ENCODE measurements at regions of chr1 and their contacts with region 1.

Region 1: DNA sequence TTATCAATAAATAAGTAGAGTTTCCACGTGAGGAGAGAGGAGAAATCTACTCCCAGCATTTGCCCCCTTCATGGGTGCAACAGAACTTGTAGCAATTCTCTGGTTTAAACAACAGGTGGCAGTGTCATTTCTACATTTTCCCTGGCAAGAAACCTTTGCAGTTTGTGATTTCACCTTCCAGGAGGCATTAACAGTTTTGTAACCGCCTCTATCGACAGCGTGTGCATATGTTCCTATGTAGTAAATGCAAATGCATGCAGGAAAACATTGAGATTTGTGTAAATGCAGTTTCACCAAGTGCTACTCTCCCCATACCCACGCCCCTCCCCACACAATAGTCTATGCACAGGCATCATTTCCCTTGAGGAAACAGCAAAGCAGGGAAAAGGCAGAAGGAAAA is 494.7 kb downstream of the SMYD3 start:
- DNase-seq: no peak
- H3K4me3 ChIP-seq: no peak overlapping the region
- H3K27ac ChIP-seq: no peak overlapping the region
- H3K4me1 ChIP-seq: no peaks in the 10 kb centered on the region
- H3K27me3 ChIP-seq: no peaks in the 10 kb centered on the region
- CTCF ChIP-seq: peak; percentile 28 to 65 (median 48)
- POLR2A ChIP-seq: no peak

Region 2: DNA sequence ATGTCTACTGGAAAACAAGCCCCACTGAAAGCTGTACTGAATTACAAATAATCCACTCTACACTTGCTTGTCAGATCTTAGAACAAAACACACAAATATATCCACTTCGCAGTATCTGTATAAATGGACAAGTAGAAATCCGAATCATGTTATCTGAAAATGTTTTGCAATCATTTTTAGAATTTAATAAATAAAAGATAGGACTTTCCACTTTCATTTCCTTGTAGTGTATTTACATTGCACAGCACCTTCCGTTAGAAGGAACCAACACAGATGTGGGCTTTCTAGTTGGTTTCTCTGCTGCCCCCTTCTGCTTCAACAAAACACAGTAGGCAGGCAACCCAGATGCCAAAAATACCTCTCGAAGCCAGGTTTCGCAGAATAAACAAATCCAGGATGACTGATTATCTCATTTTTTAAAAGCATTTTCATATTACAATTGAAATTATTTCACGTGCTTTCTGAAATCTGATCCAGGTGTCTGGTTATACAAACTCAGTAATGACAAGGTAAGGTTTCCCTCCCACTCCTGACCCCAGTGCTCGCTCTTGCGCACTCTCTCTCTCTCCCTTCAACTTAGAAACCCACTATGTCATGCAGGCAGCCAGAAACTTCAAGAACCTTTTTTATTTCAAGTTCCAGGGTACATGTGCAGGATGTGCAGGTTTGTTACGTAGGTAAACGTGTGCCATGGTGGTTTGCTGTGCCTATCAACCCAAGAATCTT is 104.9 kb after region 1 on chr1:
- intact Hi-C with region 1: loop called (anchors 10 kb)
- DNase-seq: peak; percentile 47 to 49
- H3K4me3 ChIP-seq: no peak overlapping the region
- H3K27ac ChIP-seq: no peak overlapping the region
- H3K4me1 ChIP-seq: no peaks in the 10 kb centered on the region
- H3K27me3 ChIP-seq: no peaks in the 10 kb centered on the region
- CTCF ChIP-seq: peak in 4 of 6 experiments; percentile 42 to 63 (median 53)
- POLR2A ChIP-seq: no peak

Region 3: GRCh38 chr1:246383239-246383589 is 370.9 kb after region 1 on chr1:
- intact Hi-C with region 1: no loop called
- DNase-seq: no peak
- H3K4me3 ChIP-seq: no peak overlapping the region
- H3K27ac ChIP-seq: no peak overlapping the region
- H3K4me1 ChIP-seq: no peaks in the 10 kb centered on the region
- H3K27me3 ChIP-seq: no peaks in the 10 kb centered on the region
- CTCF ChIP-seq: no peak
- POLR2A ChIP-seq: no peak

Measured in thyroid gland (tissue), 4 donors.